ENCODE measurements at regions of chr7 and their contacts with region 1.

Region 1: DNA sequence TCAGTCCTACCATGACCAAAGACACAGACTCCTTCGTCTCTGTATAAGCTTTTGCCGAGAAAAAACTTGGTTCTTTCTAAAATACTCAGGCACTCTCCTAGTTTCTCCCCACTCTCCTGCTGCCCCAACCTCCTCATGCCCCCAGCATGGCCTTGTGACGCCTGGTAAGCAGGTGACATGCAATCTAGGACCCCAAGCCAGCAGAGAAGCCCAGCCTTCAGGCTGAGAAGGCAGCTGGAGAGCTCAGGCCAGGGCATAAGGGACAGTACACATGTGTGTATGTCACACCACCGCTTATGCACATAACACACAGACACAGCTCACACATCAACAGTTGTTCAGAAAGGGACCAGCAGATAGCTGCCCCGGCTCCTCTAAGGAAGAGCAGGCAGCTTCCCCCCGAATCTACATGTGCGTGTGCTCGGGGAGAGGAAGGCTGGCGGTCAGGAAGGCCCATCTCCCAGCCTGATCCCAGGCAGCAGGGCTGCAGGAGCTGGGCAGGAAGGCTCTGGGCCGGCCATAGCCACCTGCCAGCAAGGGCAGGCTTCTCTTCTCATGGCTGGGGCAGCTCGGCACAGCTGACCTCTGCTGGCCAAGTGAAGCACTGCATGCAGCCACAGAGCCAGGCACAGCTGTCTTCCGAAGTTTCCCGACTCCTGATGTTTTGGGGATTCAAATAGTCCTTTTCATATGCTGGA is 8.5 kb downstream of the DDX56 start:
- DNase-seq: peak; percentile 80
- ATAC-seq: peak; percentile 87
- H3K4me3 Mint-ChIP-seq: no peak overlapping the region
- H3K27ac Mint-ChIP-seq: peak overlapping the region; percentile 64; the same call in 1 of the 2 replicates
- H3K4me1 Mint-ChIP-seq: no peaks in the 10 kb centered on the region
- H3K27me3 Mint-ChIP-seq: no peaks in the 10 kb centered on the region
- CTCF ChIP-seq: peak; percentile 95

Region 2: GRCh38 chr7:44240983-44241510 is 324.2 kb before region 1 on chr7:
- CTCF ChIA-PET with region 1: interaction called, 14 read pairs
- POLR2A ChIA-PET with region 1: no interaction called
- DNase-seq: peak; percentile 77
- ATAC-seq: peak; percentile 89
- H3K4me3 Mint-ChIP-seq: no peak overlapping the region
- H3K27ac Mint-ChIP-seq: no peak overlapping the region
- H3K4me1 Mint-ChIP-seq: no peaks in the 10 kb centered on the region
- H3K27me3 Mint-ChIP-seq: no peaks in the 10 kb centered on the region; the same call in 1 of the 2 replicates
- CTCF ChIP-seq: no peak; the same call in 1 of the 2 replicates

Region 3: GRCh38 chr7:44307301-44307900 is 257.8 kb before region 1 on chr7:
- CTCF ChIA-PET with region 1: no interaction called
- POLR2A ChIA-PET with region 1: no interaction called
- DNase-seq: peak; percentile 54
- ATAC-seq: peak; percentile 50
- H3K4me3 Mint-ChIP-seq: no peak overlapping the region
- H3K27ac Mint-ChIP-seq: no peak overlapping the region
- H3K4me1 Mint-ChIP-seq: peaks cover 4% of the 10 kb centered on the region; the same call in 1 of the 2 replicates
- H3K27me3 Mint-ChIP-seq: peaks cover 61% of the 10 kb centered on the region
- CTCF ChIP-seq: no peak

Region 4: DNA sequence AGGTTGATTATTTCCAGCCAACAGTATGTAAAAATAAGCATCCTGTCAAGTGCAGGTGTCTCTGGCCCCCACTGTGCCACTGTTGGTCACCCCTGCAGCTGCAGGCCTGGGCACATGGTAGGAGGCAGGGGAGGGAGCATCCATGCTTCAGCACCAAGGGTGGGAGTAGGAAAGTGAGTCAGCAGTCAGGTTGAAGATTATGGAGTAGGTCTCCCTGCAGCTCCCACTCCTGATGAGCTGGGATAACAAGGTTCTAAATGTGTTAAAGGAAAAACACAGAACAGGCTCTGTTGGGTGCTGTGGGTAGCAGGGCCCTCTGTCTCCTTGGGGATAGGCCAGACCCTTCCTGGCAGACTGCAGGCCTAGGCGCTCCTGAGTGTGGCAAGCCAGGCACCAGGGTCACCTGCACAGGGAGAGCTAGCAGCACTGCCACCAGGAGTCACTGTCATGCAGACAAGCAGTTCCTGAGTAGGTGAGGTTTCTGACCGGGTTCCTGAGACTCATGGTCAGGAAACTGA is 134.1 kb before region 1 on chr7:
- CTCF ChIA-PET with region 1: interaction called, 19 read pairs
- POLR2A ChIA-PET with region 1: no interaction called
- DNase-seq: peak; percentile 47
- ATAC-seq: peak; percentile 95
- H3K4me3 Mint-ChIP-seq: no peak overlapping the region
- H3K27ac Mint-ChIP-seq: no peak overlapping the region
- H3K4me1 Mint-ChIP-seq: peaks cover 11% of the 10 kb centered on the region
- H3K27me3 Mint-ChIP-seq: no peaks in the 10 kb centered on the region
- CTCF ChIP-seq: no peak

Region 5: DNA sequence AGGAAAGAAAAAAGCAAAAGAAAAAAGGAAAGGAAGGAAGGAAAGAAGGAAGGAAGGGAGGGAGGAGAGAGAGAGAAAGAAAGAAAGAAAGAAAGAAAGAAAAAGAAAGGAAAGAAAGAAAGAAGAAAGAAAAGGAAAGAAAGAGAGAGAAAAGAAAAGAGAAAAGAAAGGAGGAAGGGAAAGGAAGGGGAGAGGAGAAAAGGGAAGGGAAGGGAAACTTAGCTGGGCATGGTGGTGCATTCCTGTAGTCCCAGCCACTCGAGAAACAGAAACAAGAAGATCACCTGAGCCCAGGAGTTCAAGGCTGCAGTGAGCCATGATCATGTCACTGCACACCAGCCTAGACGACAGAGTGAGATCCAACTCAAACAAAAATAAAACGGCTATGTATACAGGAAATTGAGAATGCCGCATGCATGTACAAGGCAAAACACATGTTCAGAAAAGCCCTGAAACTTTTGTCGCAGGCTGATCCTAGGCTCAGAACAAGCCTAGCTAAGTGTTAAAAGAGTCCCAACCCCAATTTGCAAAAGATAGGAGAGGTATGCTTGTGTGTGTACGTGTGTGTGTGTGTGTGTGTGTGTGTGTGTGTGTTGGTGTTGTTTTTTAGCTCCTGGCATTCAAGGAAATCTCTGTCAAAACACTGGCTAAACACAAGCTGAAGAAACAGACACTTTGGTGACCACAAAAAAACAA is 17.6 kb before region 1 on chr7:
- CTCF ChIA-PET with region 1: interaction called, 12 read pairs
- POLR2A ChIA-PET with region 1: no interaction called
- DNase-seq: no peak
- ATAC-seq: no peak
- H3K4me3 Mint-ChIP-seq: no peak overlapping the region
- H3K27ac Mint-ChIP-seq: no peak overlapping the region
- H3K4me1 Mint-ChIP-seq: peaks cover 8% of the 10 kb centered on the region
- H3K27me3 Mint-ChIP-seq: no peaks in the 10 kb centered on the region; the same call in 1 of the 2 replicates
- CTCF ChIP-seq: no peak

Region 6: GRCh38 chr7:44581879-44582603 is 16.8 kb after region 1 on chr7 and contains the start of gene TMED4:
- CTCF ChIA-PET with region 1: interaction called, 14 read pairs
- POLR2A ChIA-PET with region 1: interaction called, 3 read pairs
- DNase-seq: peak; percentile 100
- ATAC-seq: peak; percentile 97
- H3K4me3 Mint-ChIP-seq: peak within 1 kb of the TSS; percentile 92
- H3K27ac Mint-ChIP-seq: peak within 1 kb of the TSS; percentile 98
- H3K4me1 Mint-ChIP-seq: peaks cover 13% of the 10 kb centered on the region
- H3K27me3 Mint-ChIP-seq: no peaks in the 10 kb centered on the region
- CTCF ChIP-seq: no peak
- total RNA-seq, gene TMED4: 58.6 to 61.9 TPM (median 60.9 TPM) in 3 replicates

Region 7: DNA sequence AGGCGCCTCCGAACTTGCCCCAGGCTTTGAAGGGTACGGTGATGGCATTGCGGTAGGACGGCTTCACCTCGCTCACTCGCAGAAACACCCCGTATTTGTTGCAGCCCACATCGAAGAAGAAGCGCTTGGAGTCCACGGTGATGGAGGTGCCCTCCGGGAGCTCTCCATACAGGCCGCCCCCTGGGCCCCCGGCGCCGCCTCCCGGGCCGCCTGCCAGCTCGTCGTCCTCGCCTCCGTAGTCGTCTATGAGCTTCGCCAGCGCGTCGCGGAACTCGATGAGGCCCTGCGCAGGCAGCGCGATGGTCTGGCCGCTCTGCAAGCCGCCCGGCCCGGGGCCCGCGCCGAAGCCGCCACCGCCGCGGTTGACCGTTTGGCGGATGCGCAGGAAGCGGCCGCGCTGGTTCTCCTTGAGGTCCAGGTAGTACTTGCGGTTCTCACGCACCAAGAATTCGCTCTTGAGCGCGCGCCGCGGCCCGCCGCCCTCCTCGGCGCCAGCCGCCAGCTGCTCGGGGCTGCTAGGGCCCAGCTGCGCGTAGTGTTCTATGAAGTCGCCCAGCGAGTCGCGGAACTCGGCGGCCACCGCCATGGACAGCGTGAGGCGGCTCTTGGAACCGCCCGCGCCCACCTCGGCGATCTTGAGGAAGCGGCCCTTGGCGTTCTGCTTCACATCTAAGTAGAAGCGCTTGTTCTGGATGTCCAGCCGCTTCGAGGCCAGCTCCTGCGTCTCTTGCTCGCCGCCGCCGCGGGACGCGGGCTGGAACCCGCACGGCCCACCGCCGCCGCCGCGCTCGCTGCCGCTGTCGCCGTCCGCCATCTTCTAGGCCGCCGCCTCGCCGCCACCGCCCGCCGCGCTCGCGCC is 319.5 kb after region 1 on chr7:
- CTCF ChIA-PET with region 1: no interaction called
- POLR2A ChIA-PET with region 1: no interaction called
- DNase-seq: peak; percentile 54
- ATAC-seq: peak; percentile 29
- H3K4me3 Mint-ChIP-seq: peak overlapping the region; percentile 90
- H3K27ac Mint-ChIP-seq: peak overlapping the region; percentile 86
- H3K4me1 Mint-ChIP-seq: peaks cover 41% of the 10 kb centered on the region
- H3K27me3 Mint-ChIP-seq: no peaks in the 10 kb centered on the region
- CTCF ChIP-seq: no peak